IMR-90 (cell line): ENCODE measurements at regions of chr3 and their contacts with region 1.

Region 1: DNA sequence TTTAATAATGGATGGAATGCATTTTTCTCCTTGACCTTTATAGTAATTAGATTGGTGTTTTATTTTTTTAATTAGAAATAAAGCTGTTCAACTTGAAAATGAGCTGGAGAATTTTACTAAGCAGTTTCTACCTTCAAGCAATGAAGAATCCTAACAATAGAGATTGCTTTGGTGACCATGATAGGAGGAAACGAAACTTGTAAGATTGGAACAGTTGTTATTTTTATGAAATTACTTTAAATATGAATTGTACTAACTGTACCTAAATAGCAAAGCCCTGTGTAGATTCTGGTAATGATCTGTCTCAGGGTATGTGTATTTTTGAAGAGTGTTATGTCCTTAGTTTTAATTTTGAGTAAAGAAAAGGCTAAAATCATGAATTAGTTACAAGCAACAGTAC is 44.4 kb downstream of the MFN1 start:
- DNase-seq: no peak
- ATAC-seq: no peak
- H3K4me3 ChIP-seq: no peak overlapping the region
- H3K27ac ChIP-seq: no peak overlapping the region
- H3K4me1 ChIP-seq: peaks cover 2% of the 10 kb centered on the region; the same call in 1 of the 2 replicates
- H3K27me3 ChIP-seq: no peaks in the 10 kb centered on the region
- CTCF ChIP-seq: no peak
- POLR2A ChIP-seq: no peak
- RAD21 ChIP-seq: no peak

Region 2: GRCh38 chr3:179363332-179363731 is 28.6 kb before region 1 on chr3:
- CTCF ChIA-PET with region 1: no interaction called
- POLR2A ChIA-PET with region 1: no interaction called
- dilution Hi-C with region 1: no loop called
- in situ Hi-C with region 1: no loop called
- intact Hi-C with region 1: loop called (anchors 1 kb)
- DNase-seq: no peak
- ATAC-seq: no peak
- H3K4me3 ChIP-seq: no peak overlapping the region
- H3K27ac ChIP-seq: no peak overlapping the region
- H3K4me1 ChIP-seq: no peaks in the 10 kb centered on the region
- H3K27me3 ChIP-seq: no peaks in the 10 kb centered on the region
- CTCF ChIP-seq: no peak
- POLR2A ChIP-seq: no peak
- RAD21 ChIP-seq: no peak